A673 (cell line): ENCODE measurements at regions of chr11 and their contacts with region 1.

Region 1: GRCh38 chr11:1832211-1832919 is 2.4 kb upstream of the SYT8 start:
- DNase-seq: peak; percentile 40
- H3K4me3 ChIP-seq: no peak overlapping the region
- H3K27ac ChIP-seq: no peak overlapping the region
- H3K4me1 ChIP-seq: no peaks in the 10 kb centered on the region
- H3K27me3 ChIP-seq: peaks cover 20% of the 10 kb centered on the region
- CTCF ChIP-seq: peak; percentile 89

Region 2: DNA sequence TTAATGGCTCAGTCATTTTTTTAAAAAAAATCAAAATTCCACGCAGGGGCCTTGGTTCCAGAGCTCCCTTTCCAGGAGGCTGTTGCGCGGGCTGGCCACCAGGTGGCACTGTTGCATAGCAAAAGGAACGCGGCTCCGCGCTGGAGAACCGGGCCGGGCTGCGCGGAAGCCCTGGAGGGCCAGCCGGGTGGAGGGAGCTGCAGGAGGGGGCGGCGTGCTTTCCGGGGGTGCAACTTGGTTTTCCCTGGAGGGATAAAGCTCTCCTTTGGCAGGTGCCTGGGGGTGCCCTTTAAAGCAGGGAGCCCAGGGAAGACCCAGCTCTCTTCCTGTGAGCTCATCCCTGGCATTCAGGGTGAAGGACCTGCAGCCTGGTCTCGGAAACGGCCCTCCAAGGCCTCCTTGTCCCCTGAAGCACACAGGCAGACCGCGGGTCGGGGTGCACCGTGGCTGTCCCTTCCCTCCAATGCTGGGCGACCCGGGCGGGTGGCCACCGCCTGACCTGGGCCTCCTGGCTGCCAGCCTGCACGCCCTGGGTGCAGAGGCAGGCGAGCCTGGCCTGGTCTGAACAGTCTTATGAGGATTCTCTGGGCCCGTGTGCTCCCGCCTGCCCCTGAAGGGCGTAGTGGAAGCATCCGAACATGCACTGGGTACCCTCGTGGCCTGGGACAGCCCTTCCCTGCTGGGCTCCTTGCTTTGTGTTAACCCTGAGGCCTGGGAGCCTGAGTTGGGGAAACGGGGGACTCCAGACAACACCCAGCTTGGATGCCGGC is 179.4 kb before region 1 on chr11:
- CTCF ChIA-PET with region 1: interaction called, 21 read pairs
- POLR2A ChIA-PET with region 1: no interaction called
- intact Hi-C with region 1: loop called (anchors 2 kb)
- DNase-seq: peak; percentile 61
- H3K4me3 ChIP-seq: no peak overlapping the region
- H3K27ac ChIP-seq: no peak overlapping the region
- H3K4me1 ChIP-seq: no peaks in the 10 kb centered on the region
- H3K27me3 ChIP-seq: no peaks in the 10 kb centered on the region
- CTCF ChIP-seq: peak; percentile 87

Region 3: GRCh38 chr11:1694064-1694845 is 138.1 kb before region 1 on chr11:
- CTCF ChIA-PET with region 1: interaction called, 101 read pairs
- POLR2A ChIA-PET with region 1: interaction called, 9 read pairs
- intact Hi-C with region 1: loop called (anchors 1 kb)
- DNase-seq: peak; percentile 70
- H3K4me3 ChIP-seq: peak overlapping the region; percentile 50
- H3K27ac ChIP-seq: peak overlapping the region; percentile 42
- H3K4me1 ChIP-seq: no peaks in the 10 kb centered on the region
- H3K27me3 ChIP-seq: no peaks in the 10 kb centered on the region
- CTCF ChIP-seq: peak; percentile 89

Region 4: DNA sequence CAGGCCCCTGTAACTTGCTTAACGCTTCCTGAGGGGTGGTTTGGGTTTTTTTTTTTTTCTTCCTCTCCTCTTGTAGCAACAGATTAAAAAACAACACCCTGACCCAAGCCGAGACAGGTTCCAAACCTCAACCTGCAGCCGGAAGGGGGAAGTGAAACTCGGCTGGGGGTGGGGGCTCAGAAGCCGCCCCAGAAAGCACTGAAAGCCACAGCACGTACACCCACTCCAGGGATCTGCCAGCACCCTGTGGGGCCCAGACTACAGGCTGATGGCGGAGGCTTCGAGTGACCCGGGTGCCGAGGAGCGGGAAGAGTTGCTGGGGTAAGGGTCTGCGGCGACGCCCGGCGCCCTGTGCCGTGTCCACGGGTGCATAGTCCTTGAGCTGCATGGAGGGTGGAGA is 20.5 kb after region 1 on chr11 and contains the start of gene LSP1:
- CTCF ChIA-PET with region 1: no interaction called
- POLR2A ChIA-PET with region 1: no interaction called
- intact Hi-C with region 1: no loop called
- DNase-seq: no peak
- H3K4me3 ChIP-seq: no peak within 1 kb of the TSS
- H3K27ac ChIP-seq: no peak within 1 kb of the TSS
- H3K4me1 ChIP-seq: no peaks in the 10 kb centered on the region
- H3K27me3 ChIP-seq: no peaks in the 10 kb centered on the region
- CTCF ChIP-seq: no peak
- total RNA-seq, gene LSP1: not detected in 2 replicates